H1 (cell line): ENCODE measurements at regions of chr1 and their contacts with region 1.

Region 1: DNA sequence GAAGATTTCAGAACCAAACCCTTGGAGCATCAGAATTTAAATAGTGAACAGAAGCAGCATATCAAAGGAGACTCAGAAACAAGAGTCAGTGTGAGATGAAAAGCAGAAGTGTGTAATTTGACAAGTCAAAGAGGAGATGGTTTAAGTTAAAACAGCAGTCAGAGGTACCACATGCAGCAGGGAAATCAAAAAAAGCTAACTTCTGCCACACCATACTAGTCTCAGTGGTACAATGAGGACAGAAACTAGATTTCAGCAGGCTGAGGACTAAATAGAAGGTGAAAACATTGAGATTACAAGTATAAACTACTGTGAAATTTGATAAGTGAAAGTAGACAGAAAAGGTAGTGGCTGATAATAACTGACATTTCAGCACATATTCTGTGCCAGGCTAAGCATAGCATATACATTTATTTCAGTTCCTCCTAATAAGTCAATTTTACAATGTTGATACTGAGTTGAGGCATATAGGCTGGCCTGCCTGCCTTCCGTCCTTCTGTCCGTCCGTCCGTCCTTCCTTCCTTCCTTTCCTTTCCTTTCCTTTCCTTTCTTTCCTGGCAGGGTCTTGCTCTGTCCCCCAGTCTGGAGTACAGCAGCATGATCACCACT is 12.6 kb downstream of the SUCO start:
- DNase-seq: no peak
- H3K4me3 ChIP-seq: no peak overlapping the region
- H3K27ac ChIP-seq: no peak overlapping the region
- H3K4me1 ChIP-seq: peaks cover 0 to 17% (median 2%) of the 10 kb centered on the region in 4 experiments; a peak in 3 of 7 replicates
- H3K27me3 ChIP-seq: no peaks in the 10 kb centered on the region
- CTCF ChIP-seq: no peak
- EP300 ChIP-seq: no peak
- POLR2A ChIP-seq: no peak
- RAD21 ChIP-seq: no peak

Region 2: DNA sequence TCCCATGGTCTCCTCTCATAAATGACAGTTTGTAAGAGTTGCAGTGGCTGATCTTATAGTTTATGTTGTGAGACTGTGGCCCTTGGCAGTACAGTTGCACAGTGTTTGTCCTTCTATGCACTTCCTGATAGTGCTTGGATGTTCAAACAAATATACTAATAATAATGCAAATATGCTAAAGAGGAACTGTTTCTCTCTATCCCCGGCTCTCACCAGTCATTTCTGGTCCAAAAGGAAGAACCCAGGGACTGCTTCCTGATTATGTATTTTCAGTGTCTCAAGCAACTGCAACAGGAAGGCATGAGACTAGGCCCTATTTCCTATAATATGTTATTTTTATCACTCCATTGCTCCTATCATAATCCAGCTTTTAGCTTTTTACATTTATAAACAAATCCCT is 29.6 kb before region 1 on chr1:
- CTCF ChIA-PET with region 1: no interaction called
- POLR2A ChIA-PET with region 1: no interaction called
- DNase-seq: no peak
- H3K4me3 ChIP-seq: no peak overlapping the region
- H3K27ac ChIP-seq: no peak overlapping the region
- H3K4me1 ChIP-seq: no peaks in the 10 kb centered on the region
- H3K27me3 ChIP-seq: no peaks in the 10 kb centered on the region
- CTCF ChIP-seq: no peak
- EP300 ChIP-seq: no peak
- POLR2A ChIP-seq: no peak
- RAD21 ChIP-seq: no peak

Region 3: GRCh38 chr1:172532700-172533509 is 12.6 kb before region 1 on chr1 and contains the start of gene SUCO:
- CTCF ChIA-PET with region 1: no interaction called
- POLR2A ChIA-PET with region 1: interaction called, 10 read pairs
- DNase-seq: peak; percentile 97 to 98
- H3K4me3 ChIP-seq: peak within 1 kb of the TSS; percentile 95 to 97 (median 96)
- H3K27ac ChIP-seq: peak within 1 kb of the TSS; percentile 97
- H3K4me1 ChIP-seq: peaks cover 0 to 15% (median 8%) of the 10 kb centered on the region in 4 experiments; a peak in 4 of 7 replicates
- H3K27me3 ChIP-seq: peaks cover 0 to 1% (median 0%) of the 10 kb centered on the region in 4 experiments; a peak in 1 of 7 replicates
- CTCF ChIP-seq: 0 out of 4 replicates have a peak, but pooled peaks of 1 of the 3 experiments have one; percentile 1
- EP300 ChIP-seq: peak in 1 of 2 experiments; percentile 16; a peak in 1 of 3 replicates
- POLR2A ChIP-seq: peak; percentile 94 to 96
- RAD21 ChIP-seq: no peak
- total RNA-seq, gene SUCO: 35.0 and 35.8 TPM in 2 replicates

Region 4: GRCh38 chr1:172870901-172871606 is 325.6 kb after region 1 on chr1:
- CTCF ChIA-PET with region 1: no interaction called
- POLR2A ChIA-PET with region 1: no interaction called
- DNase-seq: no peak
- H3K4me3 ChIP-seq: no peak overlapping the region
- H3K27ac ChIP-seq: no peak overlapping the region
- H3K4me1 ChIP-seq: no peaks in the 10 kb centered on the region
- H3K27me3 ChIP-seq: no peaks in the 10 kb centered on the region
- CTCF ChIP-seq: no peak
- EP300 ChIP-seq: no peak
- POLR2A ChIP-seq: no peak
- RAD21 ChIP-seq: no peak